Mucosa of descending colon (tissue), 3 donors: ENCODE measurements at regions of chr12 and their contacts with region 1.

Region 1: GRCh38 chr12:47032644-47033043 is 46.8 kb upstream of the PCED1B start:
- DNase-seq: peak in 1 of 3 donors; percentile 36
- ATAC-seq: peak; percentile 49
- H3K4me3 ChIP-seq: no peak overlapping the region
- H3K4me1 ChIP-seq: no peaks in the 10 kb centered on the region
- CTCF ChIP-seq: no peak

Region 2: GRCh38 chr12:47312808-47313426 is 280.3 kb after region 1 on chr12:
- intact Hi-C with region 1: loop called in 1 of 2 experiments (anchors 10 kb)
- DNase-seq: no peak
- ATAC-seq: peak; percentile 60
- H3K4me3 ChIP-seq: no peak overlapping the region
- H3K4me1 ChIP-seq: no peaks in the 10 kb centered on the region
- CTCF ChIP-seq: no peak